ENCODE measurements at regions of chr3 and their contacts with region 1.

Region 1: GRCh38 chr3:149717391-149718056 is 34.8 kb downstream of the COMMD2 start:
- DNase-seq: peak; percentile 61
- H3K4me3 ChIP-seq: no peak overlapping the region
- H3K27ac ChIP-seq: no peak overlapping the region
- H3K4me1 ChIP-seq: no peaks in the 10 kb centered on the region
- H3K27me3 ChIP-seq: no peaks in the 10 kb centered on the region
- CTCF ChIP-seq: peak; percentile 81
- EP300 ChIP-seq: no peak
- RAD21 ChIP-seq: peak; percentile 76

Region 2: DNA sequence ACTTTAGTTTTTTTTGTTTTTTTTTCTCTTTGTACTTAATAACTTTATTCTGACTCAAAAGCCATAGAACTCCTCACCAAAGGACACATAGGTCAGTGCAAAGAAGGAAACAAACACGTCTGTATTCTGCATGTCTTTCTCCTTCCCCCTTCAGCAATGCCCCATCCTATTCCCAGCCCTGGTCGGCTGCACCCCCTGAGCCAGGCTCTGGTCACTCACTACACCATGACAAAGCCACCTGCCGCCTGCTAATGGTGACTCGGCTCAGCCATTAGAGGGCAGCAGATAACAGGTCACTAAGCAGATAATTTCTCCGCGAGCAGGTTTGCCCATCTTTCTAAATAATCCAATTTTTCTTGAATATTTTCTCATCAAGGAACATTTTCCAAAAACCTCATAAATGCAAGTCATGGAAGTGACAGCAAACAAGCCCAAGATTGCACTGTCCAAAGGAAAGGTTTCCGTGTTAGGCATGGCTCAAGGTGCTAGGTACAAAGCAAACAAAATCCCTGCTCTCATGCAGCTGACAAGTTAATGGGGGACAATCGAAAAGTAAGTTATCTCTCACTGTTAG is 205.2 kb before region 1 on chr3:
- CTCF ChIA-PET with region 1: interaction called, 20 read pairs
- POLR2A ChIA-PET with region 1: no interaction called
- DNase-seq: peak; percentile 78
- H3K4me3 ChIP-seq: peak overlapping the region; percentile 21 to 29; a peak in 2 of 4 replicates
- H3K27ac ChIP-seq: no peak overlapping the region
- H3K4me1 ChIP-seq: peaks cover 0 to 12% of the 10 kb centered on the region in 2 experiments; a peak in 1 of 4 replicates
- H3K27me3 ChIP-seq: no peaks in the 10 kb centered on the region
- CTCF ChIP-seq: peak; percentile 90
- EP300 ChIP-seq: no peak
- RAD21 ChIP-seq: peak; percentile 93

Region 3: DNA sequence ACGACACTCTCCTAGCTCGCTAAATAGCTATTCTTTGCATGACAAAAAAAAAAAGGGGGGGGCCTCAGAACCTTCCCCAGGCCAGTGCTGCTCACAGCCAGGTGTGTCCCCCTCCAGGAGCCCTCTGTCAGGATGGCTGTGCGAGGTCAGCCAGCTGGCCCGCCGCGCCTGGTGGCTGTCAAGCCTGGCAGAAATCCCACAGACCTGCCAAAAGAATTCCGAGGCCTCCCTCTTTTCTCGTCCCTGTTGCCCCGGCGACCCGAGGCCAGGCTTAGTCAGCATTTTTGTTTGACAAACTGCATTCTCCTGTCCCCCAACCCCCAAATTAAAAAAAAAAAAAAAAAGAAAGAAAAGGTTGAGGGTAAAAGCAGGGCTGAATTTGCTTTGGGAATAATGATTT is 181.1 kb before region 1 on chr3:
- CTCF ChIA-PET with region 1: interaction called, 23 read pairs
- POLR2A ChIA-PET with region 1: no interaction called
- DNase-seq: peak; percentile 27
- H3K4me3 ChIP-seq: no peak overlapping the region
- H3K27ac ChIP-seq: peak overlapping the region in 1 of 2 experiments; percentile 47; a peak in 1 of 4 replicates
- H3K4me1 ChIP-seq: peaks cover 21 to 40% of the 10 kb centered on the region in 2 experiments
- H3K27me3 ChIP-seq: no peaks in the 10 kb centered on the region
- CTCF ChIP-seq: no peak
- EP300 ChIP-seq: no peak
- RAD21 ChIP-seq: no peak

Region 4: DNA sequence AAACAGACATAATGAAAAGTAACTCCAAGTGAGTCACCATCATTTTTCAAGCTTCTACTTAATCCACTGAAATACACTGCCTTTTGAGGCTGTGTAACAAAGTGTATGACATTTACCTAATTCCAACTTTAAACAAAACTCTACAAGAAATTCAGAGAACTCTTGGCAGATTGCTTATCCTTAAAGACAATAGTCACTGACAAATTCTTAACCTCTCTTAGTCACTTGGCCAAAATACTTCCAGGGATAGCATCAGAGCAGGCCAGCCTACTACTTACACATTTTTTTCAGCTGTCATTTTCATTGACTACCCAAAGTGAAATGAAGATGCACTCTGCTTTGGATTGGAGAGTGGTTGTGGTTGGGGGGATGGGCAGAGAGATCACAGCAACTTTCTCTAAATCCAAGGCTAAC is 63.3 kb before region 1 on chr3:
- CTCF ChIA-PET with region 1: interaction called, 12 read pairs
- POLR2A ChIA-PET with region 1: no interaction called
- DNase-seq: no peak
- H3K4me3 ChIP-seq: peak overlapping the region in 1 of 2 experiments; percentile 75; a peak in 3 of 4 replicates
- H3K27ac ChIP-seq: peak overlapping the region in 1 of 2 experiments; percentile 93; a peak in 2 of 4 replicates
- H3K4me1 ChIP-seq: peaks cover 4 to 19% of the 10 kb centered on the region in 2 experiments; a peak in 2 of 4 replicates
- H3K27me3 ChIP-seq: no peaks in the 10 kb centered on the region
- CTCF ChIP-seq: no peak
- EP300 ChIP-seq: peak in 1 of 2 experiments; percentile 45; a peak in 1 of 4 replicates
- RAD21 ChIP-seq: no peak

Region 5: DNA sequence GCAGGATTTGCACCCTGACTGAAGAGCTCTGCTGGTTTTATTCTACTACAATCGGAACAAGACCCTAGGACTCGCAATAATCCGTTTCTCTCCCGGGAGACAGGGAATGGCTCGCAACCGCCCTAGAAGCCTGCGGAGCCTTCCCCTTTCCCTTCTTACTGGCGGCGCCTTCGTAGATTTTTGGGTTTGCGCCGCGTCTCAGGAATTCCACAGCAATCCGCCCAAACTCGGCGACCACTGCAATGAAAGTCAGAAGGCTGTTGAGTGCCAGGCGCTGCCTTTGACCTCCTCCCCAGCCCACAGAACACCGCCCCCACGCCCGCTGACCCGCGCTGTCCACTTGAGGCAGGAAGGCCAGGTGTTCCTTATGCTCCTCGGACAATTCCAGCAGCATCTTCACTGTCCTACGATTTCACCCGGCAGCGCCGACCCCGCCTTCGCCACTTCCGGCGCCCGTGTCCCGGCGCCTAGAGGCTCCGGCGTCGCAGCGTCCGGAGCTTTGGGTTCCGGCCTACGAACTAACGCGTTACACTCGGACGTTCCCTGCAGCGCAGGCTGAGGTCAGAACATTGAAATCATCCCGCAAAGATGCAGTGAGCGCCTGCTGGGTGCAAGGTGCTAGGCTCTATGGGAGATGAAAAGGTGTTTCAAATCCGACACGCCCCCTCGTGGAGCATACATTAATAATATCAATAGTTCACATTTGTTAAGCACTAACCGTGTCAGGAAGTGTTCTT is 34.7 kb after region 1 on chr3 and contains the start of gene COMMD2:
- CTCF ChIA-PET with region 1: interaction called, 14 read pairs
- POLR2A ChIA-PET with region 1: no interaction called
- DNase-seq: peak; percentile 82
- H3K4me3 ChIP-seq: peak within 1 kb of the TSS; percentile 96
- H3K27ac ChIP-seq: peak within 1 kb of the TSS; percentile 59 to 74; a peak in 3 of 4 replicates
- H3K4me1 ChIP-seq: peaks cover 0 to 5% of the 10 kb centered on the region in 2 experiments; a peak in 3 of 4 replicates
- H3K27me3 ChIP-seq: no peaks in the 10 kb centered on the region
- CTCF ChIP-seq: peak; percentile 53
- EP300 ChIP-seq: peak in 1 of 2 experiments; percentile 22; a peak in 1 of 4 replicates
- RAD21 ChIP-seq: peak; percentile 41
- polyA plus RNA-seq, gene COMMD2: 20.9 and 21.3 TPM in 2 replicates

Region 6: GRCh38 chr3:149886957-149887356 is 169.4 kb after region 1 on chr3:
- CTCF ChIA-PET with region 1: no interaction called
- POLR2A ChIA-PET with region 1: no interaction called
- DNase-seq: no peak
- H3K4me3 ChIP-seq: no peak overlapping the region
- H3K27ac ChIP-seq: no peak overlapping the region
- H3K4me1 ChIP-seq: peaks cover 0 to 17% of the 10 kb centered on the region in 2 experiments; a peak in 2 of 4 replicates
- H3K27me3 ChIP-seq: no peaks in the 10 kb centered on the region
- CTCF ChIP-seq: no peak
- EP300 ChIP-seq: no peak
- RAD21 ChIP-seq: no peak

Region 7: DNA sequence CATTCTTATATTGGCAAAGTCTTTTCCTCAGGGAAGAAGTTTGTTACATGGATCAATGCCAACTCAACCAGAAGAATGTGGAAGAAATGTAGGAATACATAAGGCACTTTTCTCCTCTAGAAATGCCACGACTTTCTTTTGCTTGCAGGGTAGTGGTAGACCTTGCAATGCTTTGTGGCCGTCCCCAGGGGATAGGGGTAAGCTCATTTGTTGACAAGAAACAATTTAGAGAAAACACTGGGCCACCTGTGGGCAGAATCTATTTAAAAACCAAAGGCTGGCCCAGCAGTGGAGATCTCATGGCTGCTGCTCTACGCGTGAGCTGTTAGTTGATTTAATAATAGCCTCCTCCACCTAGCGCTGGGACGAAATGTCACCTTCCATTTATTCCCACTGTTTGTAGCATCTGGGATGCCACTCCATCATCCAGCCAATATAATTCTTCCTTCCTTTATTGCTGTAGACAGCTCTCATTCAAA is 317.8 kb after region 1 on chr3:
- CTCF ChIA-PET with region 1: no interaction called
- POLR2A ChIA-PET with region 1: no interaction called
- DNase-seq: no peak
- H3K4me3 ChIP-seq: no peak overlapping the region
- H3K27ac ChIP-seq: no peak overlapping the region
- H3K4me1 ChIP-seq: no peaks in the 10 kb centered on the region; a peak in 1 of 4 replicates
- H3K27me3 ChIP-seq: no peaks in the 10 kb centered on the region
- CTCF ChIP-seq: no peak
- EP300 ChIP-seq: no peak
- RAD21 ChIP-seq: no peak

Measured in SK-N-SH (cell line).